Activated CD4-positive, alpha-beta T cell treated with anti-CD3 and anti-CD28 coated beads, Interleukin-2, amount 10 ng/mL, durations not matched to agents 7 days and 5 days (primary cell): ENCODE measurements at regions of chr17 and their contacts with region 1.

Region 1: DNA sequence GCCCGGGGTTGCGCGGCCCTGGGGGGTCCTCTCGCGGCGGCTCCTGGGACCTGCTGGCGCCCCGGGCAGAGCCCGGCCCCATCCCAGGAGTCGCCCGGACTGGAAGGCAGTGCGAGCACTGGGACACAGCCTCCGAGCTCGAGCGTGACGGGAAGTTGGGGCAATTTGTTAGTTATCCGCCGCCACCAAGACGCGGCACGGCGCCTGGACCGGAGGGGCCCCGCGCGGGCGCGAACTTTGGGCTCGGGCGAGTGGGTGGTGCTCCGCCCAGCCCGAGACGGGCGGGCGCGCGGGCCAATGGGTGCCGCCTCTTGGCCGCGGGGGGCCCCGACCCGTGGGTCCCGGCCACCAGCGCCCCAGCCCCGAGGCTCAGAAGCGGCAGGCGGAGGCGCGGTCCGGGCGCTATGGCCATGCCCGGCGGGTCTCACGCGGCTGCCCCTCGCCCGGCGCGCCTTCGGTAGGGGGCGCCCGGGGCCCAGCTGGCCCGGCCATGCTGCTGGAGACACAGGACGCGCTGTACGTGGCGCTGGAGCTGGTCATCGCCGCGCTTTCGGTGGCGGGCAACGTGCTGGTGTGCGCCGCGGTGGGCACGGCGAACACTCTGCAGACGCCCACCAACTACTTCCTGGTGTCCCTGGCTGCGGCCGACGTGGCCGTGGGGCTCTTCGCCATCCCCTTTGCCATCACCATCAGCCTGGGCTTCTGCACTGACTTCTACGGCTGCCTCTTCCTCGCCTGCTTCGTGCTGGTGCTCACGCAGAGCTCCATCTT is at the start of gene ADORA2B:
- DNase-seq: peak; percentile 42
- H3K4me3 Mint-ChIP-seq: peak within 1 kb of the TSS; percentile 67
- H3K27ac Mint-ChIP-seq: peak within 1 kb of the TSS; percentile 80
- H3K4me1 Mint-ChIP-seq: peaks cover 12% of the 10 kb centered on the region
- H3K27me3 Mint-ChIP-seq: peaks cover 30% of the 10 kb centered on the region
- total RNA-seq, gene ADORA2B: 0.25 to 0.29 TPM

Region 2: GRCh38 chr17:14712611-14713021 is 1232.3 kb before region 1 on chr17:
- CTCF ChIA-PET with region 1: no interaction called
- POLR2A ChIA-PET with region 1: no interaction called
- DNase-seq: no peak
- H3K4me3 Mint-ChIP-seq: no peak overlapping the region
- H3K27ac Mint-ChIP-seq: no peak overlapping the region
- H3K4me1 Mint-ChIP-seq: no peaks in the 10 kb centered on the region
- H3K27me3 Mint-ChIP-seq: no peaks in the 10 kb centered on the region

Region 3: DNA sequence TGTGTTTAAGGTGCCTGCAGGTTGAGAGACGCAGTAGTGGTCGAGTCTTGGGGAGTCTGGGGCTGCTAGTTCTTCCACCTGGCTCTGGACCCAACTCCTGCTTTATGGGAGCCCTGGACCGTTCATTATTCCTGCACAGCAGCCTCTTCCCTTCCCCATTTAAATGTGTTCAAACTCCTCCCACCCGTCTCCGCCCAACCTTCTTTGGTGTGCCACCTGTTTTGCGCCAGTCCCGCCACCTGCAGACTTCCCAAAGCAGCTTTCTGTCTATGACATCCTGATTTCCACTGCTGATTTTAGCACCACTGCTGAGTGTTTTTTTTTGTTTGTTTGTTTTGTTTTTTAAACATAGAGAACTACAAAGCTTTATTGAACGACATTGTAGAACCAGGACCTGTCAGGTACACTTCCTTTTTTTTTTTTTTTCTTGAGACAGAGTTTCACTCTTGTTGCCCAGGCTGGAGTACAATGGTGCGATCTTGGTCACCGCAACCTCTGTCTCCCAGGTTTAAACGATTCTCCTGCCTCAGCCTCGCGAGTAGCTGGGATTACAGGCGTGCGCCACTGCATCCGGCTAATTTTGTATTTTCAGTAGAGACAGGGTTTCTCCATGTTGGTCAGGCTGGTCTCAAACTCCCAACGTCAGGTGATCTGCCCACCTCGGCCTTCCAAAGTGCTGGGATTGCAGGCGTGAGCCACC is 12.8 kb after region 1 on chr17:
- CTCF ChIA-PET with region 1: interaction called, 12 read pairs
- POLR2A ChIA-PET with region 1: no interaction called
- DNase-seq: no peak
- H3K4me3 Mint-ChIP-seq: no peak overlapping the region
- H3K27ac Mint-ChIP-seq: no peak overlapping the region
- H3K4me1 Mint-ChIP-seq: peaks cover 31% of the 10 kb centered on the region
- H3K27me3 Mint-ChIP-seq: peaks cover 35% of the 10 kb centered on the region

Region 4: DNA sequence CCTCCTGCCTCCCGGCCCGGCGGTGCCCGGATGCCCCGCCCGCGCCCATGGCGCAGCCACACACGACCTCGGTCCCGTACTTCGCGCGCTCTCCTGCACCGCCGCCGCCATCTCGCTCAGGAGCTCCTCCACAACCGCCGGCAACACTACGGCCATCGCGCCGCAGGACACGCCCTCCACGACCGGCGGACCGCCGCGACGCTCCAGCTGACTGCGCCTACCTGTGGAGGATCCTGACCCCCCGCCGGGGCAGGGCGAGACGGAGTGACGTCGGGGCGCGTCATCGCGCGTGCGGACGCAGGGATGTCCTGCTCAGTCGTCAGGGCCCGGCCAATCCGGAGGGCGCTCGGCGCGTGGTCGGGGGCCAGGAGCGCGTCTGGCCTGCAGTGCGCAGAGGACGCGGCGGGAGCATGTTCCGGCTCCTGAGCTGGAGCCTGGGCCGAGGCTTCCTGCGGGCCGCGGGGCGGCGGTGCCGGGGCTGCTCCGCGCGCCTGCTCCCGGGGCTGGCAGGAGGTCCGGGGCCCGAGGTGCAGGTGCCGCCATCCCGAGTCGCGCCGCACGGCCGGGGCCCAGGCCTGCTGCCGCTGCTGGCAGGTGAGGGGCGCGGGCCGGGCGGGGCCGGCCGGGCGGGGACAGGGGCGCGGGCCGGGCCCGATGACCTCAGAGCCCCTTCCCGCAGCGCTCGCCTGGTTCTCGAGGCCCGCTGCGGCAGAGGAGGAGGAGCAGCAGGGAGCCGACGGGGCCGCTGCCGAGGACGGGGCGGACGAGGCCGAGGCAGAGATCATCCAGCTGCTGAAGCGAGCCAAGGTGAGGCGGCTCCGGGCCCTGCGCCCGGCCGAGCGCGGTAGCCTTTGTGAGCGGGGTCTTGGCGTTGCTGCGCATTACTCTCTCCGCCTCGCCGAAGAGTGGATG is 54.8 kb after region 1 on chr17 and contains the starts of genes TTC19 and ZSWIM7:
- CTCF ChIA-PET with region 1: interaction called, 14 read pairs
- POLR2A ChIA-PET with region 1: no interaction called
- DNase-seq: peak; percentile 93
- H3K4me3 Mint-ChIP-seq: peak within 1 kb of the TSS; percentile 96
- H3K27ac Mint-ChIP-seq: peak within 1 kb of the TSS; percentile 99
- H3K4me1 Mint-ChIP-seq: peaks cover 33% of the 10 kb centered on the region
- H3K27me3 Mint-ChIP-seq: no peaks in the 10 kb centered on the region
- total RNA-seq, gene TTC19: 25.4 to 25.5 TPM
- total RNA-seq, gene ZSWIM7: 13.3 to 18.1 TPM

Region 5: GRCh38 chr17:16040710-16041251 is 95.8 kb after region 1 on chr17:
- CTCF ChIA-PET with region 1: no interaction called
- POLR2A ChIA-PET with region 1: no interaction called
- DNase-seq: no peak
- H3K4me3 Mint-ChIP-seq: no peak overlapping the region
- H3K27ac Mint-ChIP-seq: no peak overlapping the region
- H3K4me1 Mint-ChIP-seq: peaks cover 3% of the 10 kb centered on the region
- H3K27me3 Mint-ChIP-seq: no peaks in the 10 kb centered on the region